ENCODE measurements at regions of chr6 and their contacts with region 1.

Region 1: GRCh38 chr6:110389689-110390382 is 25.5 kb downstream of the DDO start:
- DNase-seq: no peak
- ATAC-seq: peak; percentile 23
- H3K4me3 ChIP-seq: no peak overlapping the region
- H3K4me3 Mint-ChIP-seq: no peak overlapping the region
- H3K27ac ChIP-seq: no peak overlapping the region
- H3K27ac Mint-ChIP-seq: peak overlapping the region; percentile 75
- H3K4me1 ChIP-seq: peaks cover 5% of the 10 kb centered on the region
- H3K4me1 Mint-ChIP-seq: peaks cover 27% of the 10 kb centered on the region
- H3K27me3 ChIP-seq: no peaks in the 10 kb centered on the region
- H3K27me3 Mint-ChIP-seq: no peaks in the 10 kb centered on the region
- CTCF ChIP-seq: no peak

Region 2: GRCh38 chr6:109526905-109527628 is 862.8 kb before region 1 on chr6:
- CTCF ChIA-PET with region 1: no interaction called
- POLR2A ChIA-PET with region 1: no interaction called
- intact Hi-C with region 1: loop called (anchors 1 to 2 kb)
- DNase-seq: peak in 13 of 14 experiments; percentile 9 to 78 (median 32)
- ATAC-seq: peak; percentile 61
- H3K4me3 ChIP-seq: no peak overlapping the region
- H3K4me3 Mint-ChIP-seq: no peak overlapping the region
- H3K27ac ChIP-seq: no peak overlapping the region
- H3K27ac Mint-ChIP-seq: no peak overlapping the region
- H3K4me1 ChIP-seq: peaks cover 4% of the 10 kb centered on the region
- H3K4me1 Mint-ChIP-seq: no peaks in the 10 kb centered on the region
- H3K27me3 ChIP-seq: no peaks in the 10 kb centered on the region
- H3K27me3 Mint-ChIP-seq: no peaks in the 10 kb centered on the region
- CTCF ChIP-seq: peak; percentile 75

Region 3: GRCh38 chr6:110331816-110332215 is 58.0 kb before region 1 on chr6:
- CTCF ChIA-PET with region 1: no interaction called
- POLR2A ChIA-PET with region 1: no interaction called
- intact Hi-C with region 1: no loop called
- DNase-seq: no peak
- ATAC-seq: no peak
- H3K4me3 ChIP-seq: no peak overlapping the region
- H3K4me3 Mint-ChIP-seq: no peak overlapping the region
- H3K27ac ChIP-seq: no peak overlapping the region
- H3K27ac Mint-ChIP-seq: no peak overlapping the region
- H3K4me1 ChIP-seq: no peaks in the 10 kb centered on the region
- H3K4me1 Mint-ChIP-seq: no peaks in the 10 kb centered on the region
- H3K27me3 ChIP-seq: peaks cover 0 to 5% of the 10 kb centered on the region in 2 experiments
- H3K27me3 Mint-ChIP-seq: peaks cover 4% of the 10 kb centered on the region
- CTCF ChIP-seq: no peak

Region 4: DNA sequence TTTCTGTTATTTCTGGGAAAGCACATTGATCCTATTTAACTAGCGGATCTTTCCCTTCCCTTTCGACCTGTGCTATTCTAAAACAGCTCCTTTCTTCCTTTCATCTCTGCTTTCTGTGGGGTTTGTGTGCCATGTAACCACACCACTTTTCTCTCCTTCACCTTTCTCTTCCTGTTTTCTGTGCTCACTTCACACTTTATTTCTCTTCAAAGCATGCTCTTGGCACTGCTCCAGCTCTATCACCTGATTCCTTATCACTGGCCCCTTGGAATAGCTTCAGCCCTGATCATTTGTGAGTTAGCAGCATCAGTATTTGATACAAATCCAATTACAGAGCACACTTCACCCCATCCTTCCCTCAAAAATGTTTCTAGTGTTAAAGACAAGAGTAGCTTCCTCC is 23.6 kb before region 1 on chr6:
- CTCF ChIA-PET with region 1: no interaction called
- POLR2A ChIA-PET with region 1: interaction called, 14 read pairs
- intact Hi-C with region 1: no loop called
- DNase-seq: peak in 2 of 14 experiments; percentile 20 to 29
- ATAC-seq: no peak
- H3K4me3 ChIP-seq: no peak overlapping the region
- H3K4me3 Mint-ChIP-seq: peak overlapping the region; percentile 9
- H3K27ac ChIP-seq: no peak overlapping the region
- H3K27ac Mint-ChIP-seq: peak overlapping the region; percentile 50
- H3K4me1 ChIP-seq: peaks cover 15% of the 10 kb centered on the region
- H3K4me1 Mint-ChIP-seq: peaks cover 42% of the 10 kb centered on the region
- H3K27me3 ChIP-seq: peaks cover 0 to 3% of the 10 kb centered on the region in 2 experiments
- H3K27me3 Mint-ChIP-seq: peaks cover 16% of the 10 kb centered on the region
- CTCF ChIP-seq: no peak

Measured in CD4-positive, alpha-beta T cell (primary cell).